ENCODE measurements at regions of chr1 and their contacts with region 1.

Region 1: DNA sequence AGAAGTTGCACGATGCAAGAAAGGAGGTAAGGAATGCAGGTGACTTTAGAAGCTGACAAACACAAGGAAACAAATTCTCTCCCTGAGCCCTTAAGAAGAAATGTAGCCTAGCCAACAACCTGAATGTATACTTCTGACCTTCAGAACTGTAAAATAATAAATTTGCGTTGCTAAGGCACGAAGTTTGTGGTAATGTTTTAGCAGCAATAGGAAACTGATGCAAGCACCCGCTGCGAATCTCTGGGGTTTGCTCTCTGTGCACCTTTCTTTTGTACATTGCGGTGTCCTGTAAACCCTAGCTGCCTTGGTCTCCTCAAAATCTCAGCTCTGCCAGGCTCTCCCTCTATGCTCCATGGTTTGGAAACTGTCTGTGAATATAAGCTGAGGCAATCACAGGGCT is 15.1 kb downstream of the CD53 start:
- DNase-seq: no peak
- H3K4me3 Mint-ChIP-seq: peak overlapping the region; percentile 49
- H3K27ac Mint-ChIP-seq: peak overlapping the region; percentile 67
- H3K4me1 Mint-ChIP-seq: peaks cover 66% of the 10 kb centered on the region
- H3K27me3 Mint-ChIP-seq: no peaks in the 10 kb centered on the region

Region 2: GRCh38 chr1:110872745-110873720 is 15.0 kb before region 1 on chr1 and contains the start of gene CD53:
- intact Hi-C with region 1: loop called (anchors 1 kb)
- DNase-seq: peak; percentile 87
- H3K4me3 Mint-ChIP-seq: peak within 1 kb of the TSS; percentile 98
- H3K27ac Mint-ChIP-seq: peak within 1 kb of the TSS; percentile 97
- H3K4me1 Mint-ChIP-seq: peaks cover 34% of the 10 kb centered on the region
- H3K27me3 Mint-ChIP-seq: no peaks in the 10 kb centered on the region
- total RNA-seq, gene CD53: 185 and 190 TPM in 2 replicates